Dorsolateral prefrontal cortex (tissue), 120 donors: ENCODE measurements at regions of chr3 and their contacts with region 1.

Region 1: DNA sequence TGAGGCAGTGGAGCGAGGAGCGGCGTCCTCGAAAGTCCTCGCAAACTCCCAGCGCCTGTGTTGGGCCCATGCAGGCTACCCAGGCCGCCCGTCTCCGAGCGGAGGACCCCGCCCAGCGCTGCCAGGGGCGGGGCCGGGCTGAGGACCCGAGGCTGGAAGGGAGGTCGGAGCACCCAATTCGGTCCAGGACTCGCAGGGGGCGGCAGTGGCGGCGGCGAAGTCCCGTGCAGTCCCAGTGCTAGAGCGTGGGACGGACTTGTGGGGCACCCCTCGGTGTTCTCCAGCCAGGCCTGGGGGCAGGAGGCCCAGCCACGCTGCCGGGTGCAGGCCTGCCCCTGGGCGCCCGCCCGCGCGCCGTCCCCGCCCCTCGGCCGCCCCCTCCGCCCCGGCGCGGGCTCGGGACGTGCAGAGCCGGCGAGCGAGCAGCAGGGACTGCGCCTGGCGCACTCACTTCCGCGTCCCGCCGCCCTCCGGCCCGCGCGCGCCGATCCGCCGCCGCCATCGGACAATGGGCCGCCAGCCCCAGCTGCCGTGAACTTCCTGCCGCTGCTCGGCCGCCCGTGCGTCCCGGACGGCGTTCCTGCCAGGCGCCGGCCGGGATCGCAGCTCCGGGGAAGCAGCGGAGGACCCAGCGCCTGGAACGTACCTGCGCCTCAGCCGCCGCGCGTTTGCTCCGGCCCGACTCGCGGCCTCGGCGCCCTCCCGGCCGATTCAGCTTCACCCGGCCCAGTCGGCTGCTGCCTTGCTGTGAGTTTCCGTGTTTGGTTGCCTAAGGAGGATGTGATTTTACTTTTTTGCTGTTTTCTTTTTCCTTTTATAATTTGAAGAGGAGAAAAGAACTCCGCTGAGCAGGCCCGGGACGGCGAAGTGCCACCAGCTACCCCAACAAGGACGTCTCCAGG is 592 bp upstream of the LIMD1 start:
- DNase-seq: peak in 4 of 10 donors; percentile 31 to 69 (median 48)
- H3K4me3 ChIP-seq: peak overlapping the region; percentile 40 to 81 (median 69)
- H3K27ac ChIP-seq: peak overlapping the region in 47 of 59 donors; percentile 6 to 85 (median 62)
- H3K27me3 ChIP-seq: no peaks in the 10 kb centered on the region
- CTCF ChIP-seq: peak in 8 of 56 donors; percentile 7 to 31 (median 12)

Region 2: GRCh38 chr3:45656575-45657363 is 62.8 kb after region 1 on chr3:
- intact Hi-C with region 1: loop called (anchors 1 to 5 kb)
- DNase-seq: peak; percentile 79 to 94 (median 89)
- H3K4me3 ChIP-seq: no peak overlapping the region
- H3K27ac ChIP-seq: no peak overlapping the region
- H3K27me3 ChIP-seq: no peaks in the 10 kb centered on the region
- CTCF ChIP-seq: peak; percentile 89 to 98 (median 95)

Region 3: DNA sequence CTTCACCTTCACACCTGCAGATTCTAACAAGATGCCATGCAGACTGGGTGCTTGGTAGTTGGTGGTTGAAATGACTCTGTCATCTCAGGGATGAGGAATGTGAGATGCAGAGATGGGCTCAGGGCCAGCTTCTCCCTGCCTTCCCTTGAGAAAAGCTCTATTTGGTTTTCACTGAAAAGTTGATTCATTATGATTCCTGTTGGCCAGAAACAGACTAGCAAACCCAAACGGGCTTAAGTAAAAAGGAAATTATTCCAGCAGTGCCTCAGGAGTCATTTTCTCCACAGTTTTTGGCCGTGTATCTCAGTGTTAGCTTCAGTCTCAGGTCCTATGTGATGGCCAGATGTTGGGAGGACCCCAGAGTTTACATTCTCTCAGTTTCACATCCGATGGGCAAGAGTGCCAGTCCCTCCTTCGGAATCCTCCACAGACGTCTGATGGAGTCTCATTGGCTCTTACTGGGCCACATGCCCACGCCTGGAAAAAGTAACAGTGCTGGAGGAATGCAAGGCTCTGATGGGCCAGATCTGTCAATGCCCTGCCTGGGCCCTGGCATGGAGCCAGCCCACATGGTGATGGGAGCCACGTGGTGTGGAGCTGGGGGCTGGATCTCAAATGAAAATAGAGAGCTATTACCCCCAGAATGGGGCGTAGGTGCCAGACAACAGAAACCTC is 72.9 kb after region 1 on chr3:
- intact Hi-C with region 1: no loop called
- DNase-seq: peak in 4 of 10 donors; percentile 33 to 67 (median 46)
- H3K4me3 ChIP-seq: peak overlapping the region in 1 of 59 donors; percentile 16
- H3K27ac ChIP-seq: peak overlapping the region in 24 of 59 donors; percentile 1 to 78 (median 29)
- H3K27me3 ChIP-seq: no peaks in the 10 kb centered on the region
- CTCF ChIP-seq: no peak